A549 (cell line): ENCODE measurements at regions of chr16 and their contacts with region 1.

Region 1: DNA sequence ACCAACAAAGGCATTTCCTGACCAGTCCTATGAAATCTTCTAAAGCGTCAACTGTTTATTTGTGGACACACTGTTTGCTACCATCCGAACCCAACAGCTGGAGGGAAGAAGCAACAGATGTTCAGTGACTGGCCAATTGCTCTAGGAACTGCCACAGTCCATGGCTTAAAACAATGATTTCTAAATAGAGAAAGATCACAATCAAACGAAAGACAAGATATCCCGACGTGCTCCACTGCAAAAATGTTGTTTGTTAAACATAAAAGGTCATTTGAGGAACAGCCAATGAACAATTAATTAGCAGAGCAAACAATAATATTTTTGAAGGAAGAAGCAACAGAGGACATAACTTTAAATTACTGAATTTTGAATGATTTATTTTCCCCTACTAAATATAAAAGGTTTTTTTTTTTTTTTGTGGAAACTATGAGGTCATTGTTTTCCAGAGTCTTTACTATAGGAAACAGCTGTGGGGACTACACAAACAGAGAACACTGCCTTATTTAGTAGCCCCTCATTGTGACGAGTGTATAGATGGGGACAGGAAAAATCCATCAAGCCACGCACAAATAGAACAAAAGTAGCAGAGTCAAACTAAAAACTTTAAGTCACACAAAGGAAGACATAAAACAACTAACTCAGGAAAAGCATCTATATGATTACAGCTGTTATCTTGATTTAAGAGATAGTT is 17.2 kb downstream of the USP31 start:
- DNase-seq: no peak
- ATAC-seq: no peak
- H3K4me3 ChIP-seq: no peak overlapping the region
- H3K27ac ChIP-seq: no peak overlapping the region
- H3K4me1 ChIP-seq: peaks cover 18% of the 10 kb centered on the region; the same call in 2 of the 3 replicates
- CTCF ChIP-seq: no peak
- EP300 ChIP-seq: no peak
- POLR2A ChIP-seq: no peak
- RAD21 ChIP-seq: no peak

Region 2: DNA sequence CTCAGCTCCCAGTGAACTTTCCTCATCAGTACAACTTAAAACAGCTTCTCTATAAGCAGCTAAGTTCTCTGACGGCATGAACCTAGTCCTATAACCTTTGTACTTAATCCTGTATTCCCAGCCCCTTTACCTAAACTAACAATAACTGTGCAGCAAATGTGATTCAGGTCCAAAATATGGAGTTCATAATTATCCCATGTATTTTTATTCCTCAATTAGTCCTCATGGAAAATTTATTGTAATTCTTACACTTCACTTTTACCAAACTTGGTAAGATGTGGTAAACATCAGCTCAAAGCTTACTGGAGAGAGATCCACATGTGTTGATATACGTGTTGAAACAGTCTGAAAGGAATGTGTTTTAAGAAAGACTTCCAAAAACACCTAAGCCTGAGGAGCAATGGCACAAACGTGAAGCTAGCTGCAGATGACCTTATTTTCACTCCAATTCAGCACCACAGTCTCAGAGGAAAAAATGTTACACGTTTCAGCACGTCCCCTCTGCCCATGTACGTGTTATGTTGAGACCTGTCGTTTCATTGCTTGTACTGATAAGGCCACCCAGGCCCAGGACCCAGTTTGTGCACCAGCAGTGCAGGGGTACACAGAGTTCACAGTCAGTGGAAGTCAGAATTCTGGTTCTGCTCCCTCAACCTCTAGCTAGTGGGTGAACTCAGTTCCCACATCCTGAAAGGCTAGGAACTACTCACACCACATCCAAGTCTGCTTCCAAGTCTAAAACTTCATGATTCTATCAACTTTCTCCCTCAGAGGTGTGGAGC is 10.1 kb after region 1 on chr16:
- CTCF ChIA-PET with region 1: interaction called, 12 read pairs
- POLR2A ChIA-PET with region 1: interaction called, 4 read pairs
- DNase-seq: no peak
- ATAC-seq: no peak
- H3K4me3 ChIP-seq: no peak overlapping the region
- H3K27ac ChIP-seq: 0 out of 6 replicates have a peak overlapping the region, but pooled peaks of 1 of the 2 experiments have one; percentile 25
- H3K4me1 ChIP-seq: peaks cover 55% of the 10 kb centered on the region
- CTCF ChIP-seq: no peak
- EP300 ChIP-seq: no peak
- POLR2A ChIP-seq: no peak
- RAD21 ChIP-seq: no peak